OCI-LY7 (cell line): ENCODE measurements at regions of chr16 and their contacts with region 1.

Region 1: DNA sequence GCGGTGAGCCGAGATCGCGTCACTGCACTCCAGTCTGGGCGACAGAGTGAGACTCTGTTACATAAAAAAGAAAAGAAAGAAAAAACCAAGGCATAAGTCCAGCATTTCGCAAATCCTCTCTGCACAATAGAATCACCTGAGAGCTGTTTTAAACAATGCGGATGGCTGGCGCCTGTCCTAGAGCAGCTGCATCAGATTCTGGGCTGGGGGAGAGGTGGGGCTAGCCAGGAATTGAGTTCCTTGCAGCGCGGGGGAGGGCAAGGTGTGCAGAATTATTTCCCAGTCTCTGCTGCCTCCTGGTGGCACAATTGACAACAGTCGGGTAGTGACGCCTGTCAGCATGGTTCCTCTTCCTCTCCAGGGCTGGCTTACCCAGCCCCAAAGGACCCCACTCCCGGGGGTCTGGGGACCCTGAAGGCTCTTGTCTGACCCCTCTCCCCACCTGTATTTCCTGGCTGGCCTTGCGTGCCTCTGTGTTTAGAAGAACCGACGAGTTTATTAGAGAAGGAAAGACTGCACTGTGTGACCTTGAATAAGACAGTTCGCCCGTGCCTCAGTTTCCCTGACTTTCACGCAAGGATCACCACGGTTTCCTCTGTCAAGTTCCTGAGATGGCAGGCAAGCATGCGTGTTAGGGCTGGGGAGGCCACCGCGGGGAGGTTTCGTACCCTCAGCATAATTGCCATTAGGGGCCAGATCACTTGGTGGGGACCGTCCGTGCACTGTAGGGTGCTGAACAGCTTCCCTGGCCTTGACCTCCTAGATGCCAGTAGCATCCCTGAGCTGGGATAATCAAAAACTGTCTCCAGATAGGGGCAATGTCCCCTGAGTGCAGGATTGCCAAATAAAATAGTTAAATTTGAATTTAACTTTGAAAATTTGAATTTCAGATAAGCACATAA is 41.0 kb upstream of the PLCG2 start:
- DNase-seq: peak; percentile 92
- H3K4me3 ChIP-seq: peak overlapping the region; percentile 71
- H3K27ac ChIP-seq: peak overlapping the region; percentile 89
- H3K4me1 ChIP-seq: peaks cover 52% of the 10 kb centered on the region
- CTCF ChIP-seq: peak; percentile 92

Region 2: DNA sequence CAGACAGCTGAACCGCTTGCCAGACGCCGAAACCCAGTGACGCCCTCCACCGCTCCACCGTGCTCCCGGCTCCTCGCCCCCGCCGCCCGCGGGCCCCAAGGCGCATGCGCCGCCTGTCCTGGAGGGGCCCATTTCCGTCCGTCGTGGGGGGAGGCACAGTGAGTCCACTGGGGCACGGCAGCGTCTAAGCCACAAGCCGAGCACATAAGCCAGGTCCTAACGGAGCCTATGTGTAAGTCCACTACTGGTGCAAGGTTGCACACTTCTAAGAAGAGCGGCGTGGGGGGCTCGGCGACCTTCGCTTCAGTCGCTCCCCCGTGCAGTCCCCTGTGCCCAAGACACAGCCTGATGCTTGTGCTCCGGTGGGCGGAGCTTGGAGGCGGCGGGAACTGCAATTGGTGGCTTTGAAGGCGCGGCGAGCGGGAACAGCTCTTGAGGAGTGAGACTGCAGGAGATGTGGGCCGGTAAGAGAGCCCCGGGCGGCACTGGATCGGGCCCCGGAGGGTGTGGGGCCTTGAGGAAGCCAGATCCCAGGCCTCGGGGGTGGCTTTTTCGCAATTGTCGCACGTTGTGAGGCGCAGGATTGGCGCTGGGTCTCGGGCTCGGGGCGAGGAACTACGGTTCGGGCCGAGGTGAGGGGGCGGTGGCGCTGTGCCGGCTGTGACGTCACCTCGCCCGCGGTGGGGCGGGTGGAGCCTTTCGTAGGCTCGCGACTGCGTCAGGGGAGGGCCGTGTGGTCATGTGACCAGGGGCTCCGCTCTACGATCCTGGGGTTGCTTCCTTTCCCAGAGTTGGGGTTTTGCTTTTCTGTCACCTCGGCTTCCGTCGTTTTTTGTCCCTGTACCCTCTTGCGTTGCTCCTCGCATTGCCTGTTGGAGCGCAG is 731.1 kb before region 1 on chr16 and contains the starts of genes CENPN and CMC2:
- CTCF ChIA-PET with region 1: no interaction called
- POLR2A ChIA-PET with region 1: no interaction called
- intact Hi-C with region 1: loop called (anchors 10 kb)
- DNase-seq: peak; percentile 98
- H3K4me3 ChIP-seq: peak within 1 kb of the TSS; percentile 75
- H3K27ac ChIP-seq: peak within 1 kb of the TSS; percentile 86
- H3K4me1 ChIP-seq: peaks cover 32% of the 10 kb centered on the region
- CTCF ChIP-seq: no peak
- total RNA-seq, gene CENPN: 52.4 and 97.3 TPM in 2 replicates
- total RNA-seq, gene CMC2: 61.3 and 99.8 TPM in 2 replicates

Region 3: DNA sequence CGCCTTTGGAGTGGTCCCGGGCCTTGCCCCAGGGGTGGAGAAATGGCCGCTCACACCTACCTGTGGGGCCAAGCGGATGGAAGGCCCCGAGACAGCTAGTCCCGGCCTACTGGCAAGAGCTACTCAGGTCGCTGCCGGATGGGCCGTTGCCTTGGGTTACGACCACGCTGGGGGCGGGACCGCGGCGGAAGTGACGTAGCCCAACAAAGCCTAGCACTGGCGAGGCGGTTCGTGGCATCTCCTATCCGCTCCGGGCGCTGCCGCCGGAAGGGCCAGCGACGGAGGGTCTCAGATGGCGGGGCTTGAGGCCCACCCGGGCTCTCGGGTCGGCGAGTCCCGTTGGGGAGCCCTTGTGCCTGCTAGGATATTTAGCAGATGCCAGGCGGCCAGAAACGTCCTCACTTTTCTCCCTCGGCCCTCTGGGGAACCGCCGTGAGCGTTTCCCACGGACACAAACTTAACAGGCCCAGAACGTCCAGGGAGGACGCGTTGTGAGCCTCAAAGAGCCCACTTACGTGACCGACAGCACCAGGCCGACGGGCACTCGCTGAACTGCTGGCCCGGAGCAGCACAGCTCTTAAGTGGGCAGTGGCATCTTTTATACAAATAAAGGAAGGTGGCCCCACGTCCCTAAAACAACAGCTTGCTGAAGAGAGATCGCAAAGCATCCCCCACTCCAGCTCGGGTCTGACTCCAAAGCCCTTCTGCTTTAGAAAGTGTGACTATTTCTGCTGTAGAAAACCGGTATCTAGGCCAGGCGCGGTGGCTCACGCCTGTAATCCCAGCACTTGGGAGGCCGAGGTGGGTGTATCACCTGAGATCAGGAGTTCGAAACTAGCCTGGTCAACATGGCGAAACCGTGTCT is 660.8 kb before region 1 on chr16 and contains the start of gene C16orf46:
- CTCF ChIA-PET with region 1: no interaction called
- POLR2A ChIA-PET with region 1: interaction called, 6 read pairs
- intact Hi-C with region 1: loop called (anchors 5 kb)
- DNase-seq: peak; percentile 96
- H3K4me3 ChIP-seq: peak within 1 kb of the TSS; percentile 74
- H3K27ac ChIP-seq: peak within 1 kb of the TSS; percentile 81
- H3K4me1 ChIP-seq: peaks cover 15% of the 10 kb centered on the region
- CTCF ChIP-seq: no peak
- total RNA-seq, gene C16orf46: 0.69 and 1.6 TPM in 2 replicates

Region 4: DNA sequence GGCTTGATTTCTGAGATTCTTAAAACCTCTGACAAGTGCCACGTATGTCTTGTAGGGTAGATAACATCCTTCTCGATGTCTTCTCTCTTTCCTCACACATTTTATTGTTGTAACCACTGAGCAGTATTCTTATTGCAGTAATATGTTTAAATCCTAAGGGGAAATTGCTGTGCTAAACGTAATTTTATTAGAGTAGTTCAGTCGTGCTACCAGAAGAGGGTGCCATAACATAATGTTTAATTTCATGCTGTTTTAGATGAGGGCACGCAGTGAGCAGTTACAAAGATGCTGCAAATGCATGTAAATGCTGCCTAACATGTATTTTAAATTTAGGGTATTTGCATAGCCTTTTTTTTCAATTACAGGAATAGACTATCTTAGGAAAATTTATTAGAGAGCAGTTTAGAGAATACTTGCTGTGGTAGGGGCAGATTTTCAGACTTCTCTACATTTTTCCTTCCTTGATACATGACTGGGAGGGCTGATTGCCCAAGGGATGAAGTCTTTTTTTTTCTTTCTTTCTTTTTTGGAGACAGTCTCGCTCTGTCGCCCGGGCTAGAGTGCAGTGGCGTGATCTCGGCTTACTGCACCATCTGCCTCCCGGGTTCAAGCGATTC is 371.7 kb before region 1 on chr16:
- CTCF ChIA-PET with region 1: no interaction called
- POLR2A ChIA-PET with region 1: no interaction called
- intact Hi-C with region 1: loop called (anchors 1 kb)
- DNase-seq: peak; percentile 70
- H3K4me3 ChIP-seq: no peak overlapping the region
- H3K27ac ChIP-seq: no peak overlapping the region
- H3K4me1 ChIP-seq: no peaks in the 10 kb centered on the region
- CTCF ChIP-seq: peak; percentile 96

Region 5: DNA sequence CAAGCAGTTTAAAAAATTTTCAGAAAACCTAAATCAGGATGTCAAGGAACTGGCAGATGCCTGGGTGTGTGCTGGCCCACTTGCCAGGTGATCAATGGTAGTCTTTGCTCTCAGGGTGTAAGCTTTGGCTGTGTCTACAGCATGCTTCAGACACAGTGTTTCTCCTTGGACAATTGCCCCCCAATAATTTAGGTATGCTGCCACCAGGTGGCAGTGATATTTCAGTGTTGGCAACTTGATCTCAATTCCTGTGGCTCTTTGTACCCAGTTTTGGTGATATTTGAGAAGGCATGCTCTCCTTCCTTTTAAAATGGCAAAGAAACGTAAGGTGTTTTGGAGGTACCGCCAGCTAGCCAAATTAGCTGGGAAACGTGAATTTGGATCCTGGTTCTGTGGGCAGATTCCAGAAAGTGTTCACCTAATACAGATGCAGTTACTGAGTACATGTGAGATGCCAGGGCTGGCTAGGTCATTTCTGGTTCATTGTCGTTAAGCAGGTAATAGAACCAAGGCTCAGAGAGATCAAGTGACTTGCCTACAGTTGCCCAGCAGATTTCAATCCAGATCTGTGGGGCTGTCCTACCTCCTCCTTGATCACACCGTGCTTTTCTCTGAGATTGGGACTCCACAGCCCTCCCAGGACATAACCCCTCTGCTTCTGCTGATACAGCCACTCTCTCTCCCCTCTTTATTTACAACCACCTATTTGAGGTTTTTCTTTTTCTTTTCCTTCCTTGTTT is 114.6 kb before region 1 on chr16:
- CTCF ChIA-PET with region 1: no interaction called
- POLR2A ChIA-PET with region 1: no interaction called
- intact Hi-C with region 1: loop called (anchors 1 kb)
- DNase-seq: peak; percentile 72
- H3K4me3 ChIP-seq: no peak overlapping the region
- H3K27ac ChIP-seq: no peak overlapping the region
- H3K4me1 ChIP-seq: no peaks in the 10 kb centered on the region
- CTCF ChIP-seq: peak; percentile 90

Region 6: DNA sequence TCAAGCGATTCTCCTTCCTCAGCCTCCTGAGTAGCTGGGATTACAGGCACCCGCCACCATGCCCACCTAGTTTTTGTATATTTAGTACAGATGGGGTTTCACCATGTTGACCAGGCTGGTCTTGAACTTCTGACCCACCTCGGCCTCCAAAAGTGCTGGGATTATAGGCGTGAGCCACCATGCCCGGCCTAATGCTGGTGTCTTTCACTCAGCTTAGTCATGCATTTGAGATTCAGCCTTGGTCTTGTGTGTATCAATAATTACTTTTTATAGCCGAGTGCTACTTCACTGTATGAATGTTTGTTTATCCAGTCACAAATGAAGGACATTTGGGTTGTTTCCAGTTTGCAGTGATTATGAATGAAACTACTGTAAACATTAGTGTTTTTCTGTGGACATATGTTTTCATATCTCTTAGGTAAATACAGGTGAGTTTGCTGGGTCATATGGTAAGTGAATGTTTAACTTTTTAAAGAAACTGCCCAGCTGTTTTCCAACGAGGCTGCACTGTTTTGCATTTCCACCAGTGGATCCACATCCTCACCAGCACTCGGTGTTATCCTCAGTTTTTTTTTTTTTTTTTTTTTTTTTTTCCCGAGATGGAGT is 30.0 kb after region 1 on chr16:
- CTCF ChIA-PET with region 1: no interaction called
- POLR2A ChIA-PET with region 1: no interaction called
- intact Hi-C with region 1: no loop called
- DNase-seq: no peak
- H3K4me3 ChIP-seq: no peak overlapping the region
- H3K27ac ChIP-seq: no peak overlapping the region
- H3K4me1 ChIP-seq: peaks cover 26% of the 10 kb centered on the region
- CTCF ChIP-seq: no peak

Region 7: GRCh38 chr16:81786321-81786720 is 48.2 kb after region 1 on chr16:
- CTCF ChIA-PET with region 1: interaction called, 3 read pairs
- POLR2A ChIA-PET with region 1: interaction called, 8 read pairs
- intact Hi-C with region 1: loop called (anchors 2 kb)
- DNase-seq: peak; percentile 50
- H3K4me3 ChIP-seq: peak overlapping the region; percentile 76
- H3K27ac ChIP-seq: peak overlapping the region; percentile 92
- H3K4me1 ChIP-seq: peaks cover 86% of the 10 kb centered on the region
- CTCF ChIP-seq: no peak

Region 8: DNA sequence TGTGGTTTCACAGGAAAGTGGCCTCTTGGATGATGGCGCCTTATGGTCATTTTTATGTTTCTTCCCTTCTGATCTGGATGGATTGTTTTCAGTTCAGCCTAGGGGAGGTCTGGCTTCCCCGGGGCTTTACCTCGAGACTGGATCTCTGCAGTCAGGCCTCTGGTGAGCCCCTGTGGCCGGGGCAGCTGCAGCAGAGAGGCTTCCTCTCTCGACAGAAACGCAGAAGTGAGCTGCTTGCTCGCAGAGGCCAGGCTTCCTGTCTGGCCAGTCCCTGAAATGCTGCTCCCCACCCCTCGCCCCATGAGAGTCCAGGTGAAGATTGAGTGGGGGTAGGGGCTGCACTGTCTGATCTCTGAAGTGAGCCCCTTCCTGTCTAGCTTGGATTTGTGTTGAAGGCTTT is 85.0 kb after region 1 on chr16:
- CTCF ChIA-PET with region 1: no interaction called
- POLR2A ChIA-PET with region 1: interaction called, 4 read pairs
- intact Hi-C with region 1: loop called (anchors 2 kb)
- DNase-seq: peak; percentile 91
- H3K4me3 ChIP-seq: peak overlapping the region; percentile 64
- H3K27ac ChIP-seq: peak overlapping the region; percentile 97
- H3K4me1 ChIP-seq: peaks cover 94% of the 10 kb centered on the region
- CTCF ChIP-seq: 0 out of 2 replicates have a peak, but pooled peaks have one; percentile 18